Activated naive CD4-positive, alpha-beta T cell treated with anti-CD3 and anti-CD28 coated beads for 36 hours (primary cell): ENCODE measurements at regions of chr5 and their contacts with region 1.

Region 1: GRCh38 chr5:132238169-132238744 is 10.6 kb upstream of the P4HA2 start:
- DNase-seq: peak; percentile 89
- H3K4me3 Mint-ChIP-seq: no peak overlapping the region
- H3K27ac Mint-ChIP-seq: no peak overlapping the region
- H3K4me1 Mint-ChIP-seq: no peaks in the 10 kb centered on the region
- H3K27me3 Mint-ChIP-seq: peaks cover 5% of the 10 kb centered on the region

Region 2: GRCh38 chr5:131883984-131884383 is 354.3 kb before region 1 on chr5:
- CTCF ChIA-PET with region 1: no interaction called
- intact Hi-C with region 1: no loop called
- DNase-seq: no peak
- H3K4me3 Mint-ChIP-seq: no peak overlapping the region
- H3K27ac Mint-ChIP-seq: no peak overlapping the region
- H3K4me1 Mint-ChIP-seq: no peaks in the 10 kb centered on the region
- H3K27me3 Mint-ChIP-seq: no peaks in the 10 kb centered on the region

Region 3: GRCh38 chr5:132142459-132142858 is 95.8 kb before region 1 on chr5:
- CTCF ChIA-PET with region 1: no interaction called
- intact Hi-C with region 1: no loop called
- DNase-seq: no peak
- H3K4me3 Mint-ChIP-seq: no peak overlapping the region
- H3K27ac Mint-ChIP-seq: no peak overlapping the region
- H3K4me1 Mint-ChIP-seq: no peaks in the 10 kb centered on the region
- H3K27me3 Mint-ChIP-seq: peaks cover 20% of the 10 kb centered on the region

Region 4: DNA sequence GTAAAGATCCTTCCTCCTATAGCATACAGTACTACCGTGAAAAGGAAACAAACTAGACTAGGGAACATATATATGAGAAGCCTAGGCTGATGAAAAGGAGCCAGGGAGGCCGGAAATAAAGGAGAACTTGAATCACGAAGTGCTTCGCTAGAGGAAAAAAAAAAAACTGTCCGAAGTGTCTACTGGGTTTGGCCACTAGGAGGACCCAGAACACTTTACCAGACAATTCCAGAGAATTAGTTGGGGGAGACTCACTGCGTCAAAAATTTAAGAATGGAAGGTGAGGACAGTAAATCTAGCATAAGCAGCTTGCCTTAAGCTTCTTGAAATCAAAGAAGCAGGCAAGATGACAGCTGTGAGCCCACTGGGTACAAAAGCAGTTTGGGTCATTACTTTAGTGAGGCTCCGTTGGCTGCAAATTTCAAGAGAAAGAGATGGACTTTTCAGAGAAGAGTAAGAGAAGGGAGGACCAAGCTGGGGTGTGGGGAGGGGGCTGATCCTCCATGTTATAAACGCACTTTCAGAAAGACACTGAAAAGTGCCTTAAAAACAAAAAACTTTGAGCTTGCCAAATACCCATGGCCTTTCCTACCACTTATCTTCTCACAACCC is 58.0 kb before region 1 on chr5:
- CTCF ChIA-PET with region 1: interaction called, 15 read pairs
- intact Hi-C with region 1: no loop called
- DNase-seq: peak; percentile 27
- H3K4me3 Mint-ChIP-seq: no peak overlapping the region
- H3K27ac Mint-ChIP-seq: no peak overlapping the region
- H3K4me1 Mint-ChIP-seq: peaks cover 24% of the 10 kb centered on the region
- H3K27me3 Mint-ChIP-seq: no peaks in the 10 kb centered on the region

Region 5: DNA sequence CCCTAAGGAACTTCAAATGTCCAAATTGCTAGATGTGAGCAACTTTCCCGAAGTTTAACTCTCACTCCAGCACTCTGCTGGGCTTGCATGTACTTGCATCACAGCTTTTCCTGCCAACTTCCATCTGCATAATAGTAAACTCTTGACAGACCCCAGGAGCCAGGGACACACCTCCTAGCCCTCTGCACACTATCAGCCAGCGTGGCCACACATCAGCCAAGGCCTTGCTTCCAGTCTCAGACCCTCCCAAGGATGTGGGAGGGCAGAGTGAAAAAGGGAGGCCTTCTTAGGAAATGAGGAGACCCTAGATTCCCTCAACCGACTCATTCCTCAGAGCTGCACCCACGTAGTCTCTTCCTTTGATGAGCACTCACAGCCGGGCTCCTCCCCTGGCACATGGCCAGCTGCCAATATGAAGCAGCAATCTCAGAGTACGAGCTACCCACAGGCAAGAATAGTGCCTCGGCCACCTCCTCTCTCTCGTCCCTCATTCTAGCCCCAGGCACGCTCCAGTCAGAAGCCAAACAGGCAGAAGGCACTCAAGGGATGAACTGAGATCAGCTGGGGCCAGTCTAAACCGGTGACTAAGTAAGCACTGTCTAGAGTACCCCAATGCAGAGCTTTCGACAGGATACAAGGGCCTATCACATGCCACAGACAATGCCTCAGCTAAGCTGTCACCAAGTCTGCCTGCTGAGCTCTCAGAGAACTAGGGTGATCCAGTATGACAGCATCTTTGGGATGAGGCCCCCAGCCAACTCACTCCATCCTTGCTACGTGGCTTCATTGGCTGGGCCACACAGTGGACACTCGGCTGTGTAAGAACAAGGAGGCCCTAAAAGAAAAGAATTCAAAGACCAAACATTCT is 12.9 kb before region 1 on chr5:
- CTCF ChIA-PET with region 1: interaction called, 13 read pairs
- intact Hi-C with region 1: no loop called
- DNase-seq: peak; percentile 43
- H3K4me3 Mint-ChIP-seq: no peak overlapping the region
- H3K27ac Mint-ChIP-seq: no peak overlapping the region
- H3K4me1 Mint-ChIP-seq: peaks cover 4% of the 10 kb centered on the region
- H3K27me3 Mint-ChIP-seq: peaks cover 30% of the 10 kb centered on the region

Region 6: DNA sequence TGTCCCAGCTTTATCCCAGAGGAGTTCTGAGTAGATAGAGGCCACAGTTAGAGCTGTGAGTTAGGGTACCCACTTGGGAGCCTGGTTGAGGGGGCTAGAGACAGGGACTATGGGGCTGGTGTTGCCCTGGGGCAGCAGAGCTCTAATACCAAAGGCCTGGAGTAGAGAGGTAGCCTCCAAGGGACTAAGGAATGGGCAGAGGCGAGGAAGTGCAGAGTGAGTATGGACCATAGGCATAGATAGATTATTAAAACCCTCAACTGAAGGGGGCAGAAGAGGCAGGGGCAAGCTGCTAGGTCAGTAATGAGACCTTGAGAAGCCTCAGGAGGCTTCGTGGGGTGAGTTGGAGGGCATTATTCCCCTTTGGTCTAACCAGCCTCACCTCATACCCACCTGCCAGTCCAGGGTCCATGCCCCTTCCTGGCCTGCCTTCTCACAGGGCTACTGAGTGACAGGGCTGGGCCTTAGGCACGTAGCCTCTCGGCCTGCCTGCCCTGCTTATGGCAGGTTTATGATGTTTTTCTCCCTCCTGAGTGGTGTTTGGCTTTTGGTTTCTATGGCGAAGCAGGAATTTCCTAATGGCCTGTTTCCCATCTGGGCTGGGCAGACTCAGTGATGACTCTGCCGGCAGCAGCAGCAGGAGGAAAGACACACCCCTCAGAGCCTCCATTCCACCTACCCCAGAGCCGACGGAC is 27.2 kb after region 1 on chr5:
- CTCF ChIA-PET with region 1: interaction called, 10 read pairs
- intact Hi-C with region 1: loop called (anchors 5 kb)
- DNase-seq: peak; percentile 3
- H3K4me3 Mint-ChIP-seq: no peak overlapping the region
- H3K27ac Mint-ChIP-seq: no peak overlapping the region
- H3K4me1 Mint-ChIP-seq: peaks cover 4% of the 10 kb centered on the region
- H3K27me3 Mint-ChIP-seq: no peaks in the 10 kb centered on the region

Region 7: DNA sequence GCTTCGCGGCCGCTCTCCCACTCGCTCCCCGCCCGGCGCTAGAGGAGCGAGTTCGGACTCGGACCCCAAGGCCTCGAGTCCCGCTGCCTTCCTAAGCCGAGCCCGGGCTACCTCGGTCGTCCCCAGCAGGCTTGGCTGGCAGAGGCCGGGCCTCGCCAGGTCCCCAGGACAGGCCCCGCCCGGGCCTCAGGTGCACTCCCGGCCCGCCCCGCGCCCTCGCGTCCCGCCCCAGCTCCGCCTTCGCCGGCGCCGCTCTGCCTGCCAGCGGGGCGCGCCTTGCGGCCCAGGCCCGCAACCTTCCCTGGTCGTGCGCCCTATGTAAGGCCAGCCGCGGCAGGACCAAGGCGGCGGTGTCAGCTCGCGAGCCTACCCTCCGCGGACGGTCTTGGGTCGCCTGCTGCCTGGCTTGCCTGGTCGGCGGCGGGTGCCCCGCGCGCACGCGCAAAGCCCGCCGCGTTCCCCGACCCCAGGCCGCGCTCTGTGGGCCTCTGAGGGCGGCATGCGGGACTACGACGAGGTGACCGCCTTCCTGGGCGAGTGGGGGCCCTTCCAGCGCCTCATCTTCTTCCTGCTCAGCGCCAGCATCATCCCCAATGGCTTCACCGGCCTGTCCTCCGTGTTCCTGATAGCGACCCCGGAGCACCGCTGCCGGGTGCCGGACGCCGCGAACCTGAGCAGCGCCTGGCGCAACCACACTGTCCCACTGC is 131.4 kb after region 1 on chr5 and contains the start of gene SLC22A5:
- CTCF ChIA-PET with region 1: interaction called, 9 read pairs
- intact Hi-C with region 1: loop called (anchors 1 kb)
- DNase-seq: peak; percentile 72
- H3K4me3 Mint-ChIP-seq: peak within 1 kb of the TSS; percentile 77
- H3K27ac Mint-ChIP-seq: peak within 1 kb of the TSS; percentile 68
- H3K4me1 Mint-ChIP-seq: peaks cover 22% of the 10 kb centered on the region
- H3K27me3 Mint-ChIP-seq: no peaks in the 10 kb centered on the region
- total RNA-seq, gene SLC22A5: 3.1 to 3.6 TPM